CD8-positive, alpha-beta memory T cell (primary cell): ENCODE measurements at regions of chr13 and their contacts with region 1.

Region 1: GRCh38 chr13:24727731-24728601 is 36.0 kb upstream of the RNF17 start:
- DNase-seq: peak; percentile 53 to 84 (median 73)
- H3K4me3 ChIP-seq: no peak overlapping the region
- H3K4me3 Mint-ChIP-seq: no peak overlapping the region
- H3K27ac ChIP-seq: no peak overlapping the region
- H3K27ac Mint-ChIP-seq: no peak overlapping the region
- H3K4me1 ChIP-seq: no peaks in the 10 kb centered on the region
- H3K4me1 Mint-ChIP-seq: peaks cover 0 to 3% (median 2%) of the 10 kb centered on the region in 3 donors
- H3K27me3 ChIP-seq: no peaks in the 10 kb centered on the region
- H3K27me3 Mint-ChIP-seq: peaks cover 3 to 16% of the 10 kb centered on the region in 2 donors

Region 2: GRCh38 chr13:24563087-24563486 is 164.9 kb before region 1 on chr13:
- CTCF ChIA-PET with region 1: no interaction called
- POLR2A ChIA-PET with region 1: no interaction called
- DNase-seq: no peak
- H3K4me3 ChIP-seq: no peak overlapping the region
- H3K4me3 Mint-ChIP-seq: no peak overlapping the region
- H3K27ac ChIP-seq: no peak overlapping the region
- H3K27ac Mint-ChIP-seq: no peak overlapping the region
- H3K4me1 ChIP-seq: no peaks in the 10 kb centered on the region
- H3K4me1 Mint-ChIP-seq: peaks cover 8 to 11% (median 10%) of the 10 kb centered on the region in 3 donors
- H3K27me3 ChIP-seq: no peaks in the 10 kb centered on the region
- H3K27me3 Mint-ChIP-seq: peaks cover 35 to 53% of the 10 kb centered on the region in 2 donors

Region 3: DNA sequence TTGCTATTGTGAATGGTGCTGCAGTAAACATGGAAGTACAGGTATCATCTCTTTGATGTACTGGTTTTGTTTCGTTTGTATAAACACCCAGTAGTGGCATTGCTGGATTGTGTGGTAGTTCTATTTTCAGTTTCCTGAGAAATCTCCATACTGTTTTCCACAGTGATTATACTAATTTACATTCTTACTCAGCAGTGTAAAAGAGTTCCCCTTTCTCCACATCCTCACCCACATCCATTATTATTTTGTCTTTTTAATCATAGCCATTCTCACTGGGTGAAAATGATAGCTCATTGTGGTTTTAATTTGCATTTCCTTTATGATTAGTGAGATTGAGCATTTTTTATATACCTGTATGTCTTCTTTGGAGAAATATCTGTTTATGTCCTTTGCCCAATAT is 153.1 kb before region 1 on chr13:
- CTCF ChIA-PET with region 1: interaction called, 16 read pairs
- POLR2A ChIA-PET with region 1: no interaction called
- DNase-seq: no peak
- H3K4me3 ChIP-seq: no peak overlapping the region
- H3K4me3 Mint-ChIP-seq: no peak overlapping the region
- H3K27ac ChIP-seq: no peak overlapping the region
- H3K27ac Mint-ChIP-seq: no peak overlapping the region
- H3K4me1 ChIP-seq: no peaks in the 10 kb centered on the region
- H3K4me1 Mint-ChIP-seq: no peaks in the 10 kb centered on the region
- H3K27me3 ChIP-seq: no peaks in the 10 kb centered on the region
- H3K27me3 Mint-ChIP-seq: peaks cover 7 to 19% of the 10 kb centered on the region in 2 donors

Region 4: GRCh38 chr13:24671386-24672107 is 56.4 kb before region 1 on chr13:
- CTCF ChIA-PET with region 1: interaction called, 15 read pairs
- POLR2A ChIA-PET with region 1: no interaction called
- DNase-seq: peak in 1 of 5 donors; percentile 17
- H3K4me3 ChIP-seq: no peak overlapping the region
- H3K4me3 Mint-ChIP-seq: no peak overlapping the region
- H3K27ac ChIP-seq: no peak overlapping the region
- H3K27ac Mint-ChIP-seq: peak overlapping the region in 1 of 8 donors; percentile 19
- H3K4me1 ChIP-seq: peaks cover 8% of the 10 kb centered on the region
- H3K4me1 Mint-ChIP-seq: peaks cover 4 to 11% (median 10%) of the 10 kb centered on the region in 3 donors
- H3K27me3 ChIP-seq: peaks cover 9% of the 10 kb centered on the region
- H3K27me3 Mint-ChIP-seq: peaks cover 8 to 27% of the 10 kb centered on the region in 2 donors

Region 5: GRCh38 chr13:24683838-24684599 is 43.9 kb before region 1 on chr13:
- CTCF ChIA-PET with region 1: interaction called, 12 read pairs
- POLR2A ChIA-PET with region 1: no interaction called
- DNase-seq: peak; percentile 27 to 75 (median 46)
- H3K4me3 ChIP-seq: no peak overlapping the region
- H3K4me3 Mint-ChIP-seq: peak overlapping the region; percentile 21 to 84 (median 30)
- H3K27ac ChIP-seq: no peak overlapping the region
- H3K27ac Mint-ChIP-seq: peak overlapping the region in 5 of 8 donors; percentile 15 to 57 (median 39)
- H3K4me1 ChIP-seq: peaks cover 35% of the 10 kb centered on the region
- H3K4me1 Mint-ChIP-seq: peaks cover 30 to 39% (median 33%) of the 10 kb centered on the region in 3 donors
- H3K27me3 ChIP-seq: peaks cover 12% of the 10 kb centered on the region
- H3K27me3 Mint-ChIP-seq: peaks cover 31 to 38% of the 10 kb centered on the region in 2 donors

Region 6: DNA sequence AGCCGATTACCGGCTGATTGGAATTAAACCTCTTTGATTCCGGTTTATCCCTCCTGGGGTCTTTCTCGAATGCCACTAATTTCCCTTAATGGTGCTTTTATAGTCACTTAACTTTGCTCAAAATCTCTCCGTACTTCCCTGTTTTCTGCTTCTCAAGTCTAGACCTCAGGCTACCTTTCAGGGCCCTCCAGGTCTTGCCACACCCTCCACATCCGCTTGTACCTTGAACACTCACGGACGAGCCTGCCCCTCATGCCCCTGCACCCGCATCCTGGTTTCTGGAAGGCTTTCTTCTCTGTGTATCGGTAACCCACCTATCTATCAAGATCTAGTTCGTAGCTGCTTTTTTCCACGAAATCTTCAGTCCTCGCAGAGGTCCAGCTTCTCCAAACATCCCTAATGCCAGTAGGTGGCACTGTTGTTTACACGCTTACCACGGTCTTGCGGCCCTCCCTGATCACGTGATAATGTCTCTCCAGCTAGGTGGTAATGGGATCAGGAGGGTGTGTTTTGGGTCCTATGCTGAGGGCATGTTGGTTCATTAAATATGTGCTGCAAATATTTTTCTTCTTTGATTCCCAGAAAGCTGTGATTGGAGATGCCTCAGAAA is 34.0 kb before region 1 on chr13:
- CTCF ChIA-PET with region 1: interaction called, 13 read pairs
- POLR2A ChIA-PET with region 1: no interaction called
- DNase-seq: peak in 2 of 5 donors; percentile 23 to 32
- H3K4me3 ChIP-seq: no peak overlapping the region
- H3K4me3 Mint-ChIP-seq: peak overlapping the region in 3 of 7 donors; percentile 15 to 52 (median 44)
- H3K27ac ChIP-seq: no peak overlapping the region
- H3K27ac Mint-ChIP-seq: peak overlapping the region in 1 of 8 donors; percentile 21
- H3K4me1 ChIP-seq: peaks cover 6% of the 10 kb centered on the region
- H3K4me1 Mint-ChIP-seq: peaks cover 6 to 12% (median 12%) of the 10 kb centered on the region in 3 donors
- H3K27me3 ChIP-seq: no peaks in the 10 kb centered on the region
- H3K27me3 Mint-ChIP-seq: peaks cover 26 to 65% of the 10 kb centered on the region in 2 donors